ENCODE measurements at regions of chr17 and their contacts with region 1.

Region 1: GRCh38 chr17:51461578-51462004 is 201.2 kb downstream of the UTP18 start:
- DNase-seq: peak; percentile 29 to 85
- H3K4me3 ChIP-seq: no peak overlapping the region
- H3K27ac ChIP-seq: no peak overlapping the region
- H3K4me1 ChIP-seq: no peaks in the 10 kb centered on the region
- H3K27me3 ChIP-seq: no peaks in the 10 kb centered on the region
- CTCF ChIP-seq: peak; percentile 80 to 92 (median 85)
- EP300 ChIP-seq: no peak
- POLR2A ChIP-seq: no peak
- RAD21 ChIP-seq: peak; percentile 59 to 72

Region 2: DNA sequence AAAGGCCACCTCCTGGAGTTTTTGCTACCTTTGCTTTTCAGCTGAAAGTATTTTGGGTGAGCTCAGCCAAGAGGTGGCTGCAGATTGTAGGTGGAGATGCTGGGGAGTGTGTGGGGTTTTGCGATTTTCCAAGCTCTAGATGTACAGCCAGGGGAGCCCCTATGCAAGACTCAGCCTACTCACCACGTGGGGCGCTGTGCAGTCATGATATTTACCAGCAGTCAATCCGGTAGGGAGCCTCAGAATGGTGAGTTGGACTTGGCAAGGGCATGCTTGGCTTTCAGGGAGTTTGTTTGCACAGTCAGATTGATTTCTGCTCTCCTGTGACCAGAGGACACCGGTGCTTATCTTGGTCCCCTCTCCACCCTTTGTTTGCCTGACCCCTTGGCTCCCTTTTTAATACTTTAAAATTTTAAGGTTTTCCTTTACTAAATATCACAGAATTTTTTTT is 25.9 kb before region 1 on chr17:
- CTCF ChIA-PET with region 1: interaction called, 15 read pairs
- POLR2A ChIA-PET with region 1: no interaction called
- DNase-seq: peak; percentile 7 to 72
- H3K4me3 ChIP-seq: no peak overlapping the region
- H3K27ac ChIP-seq: no peak overlapping the region
- H3K4me1 ChIP-seq: peaks cover 0 to 3% (median 0%) of the 10 kb centered on the region in 4 experiments; a peak in 2 of 7 replicates
- H3K27me3 ChIP-seq: no peaks in the 10 kb centered on the region
- CTCF ChIP-seq: peak; percentile 78 to 81 (median 80)
- EP300 ChIP-seq: no peak
- POLR2A ChIP-seq: no peak
- RAD21 ChIP-seq: peak; percentile 48 to 52

Region 3: GRCh38 chr17:51472670-51473205 is 11.1 kb after region 1 on chr17:
- CTCF ChIA-PET with region 1: interaction called, 45 read pairs
- POLR2A ChIA-PET with region 1: no interaction called
- DNase-seq: no peak
- H3K4me3 ChIP-seq: no peak overlapping the region
- H3K27ac ChIP-seq: no peak overlapping the region
- H3K4me1 ChIP-seq: peaks cover 0 to 7% (median 1%) of the 10 kb centered on the region in 4 experiments; a peak in 3 of 7 replicates
- H3K27me3 ChIP-seq: no peaks in the 10 kb centered on the region
- CTCF ChIP-seq: no peak
- EP300 ChIP-seq: no peak
- POLR2A ChIP-seq: no peak
- RAD21 ChIP-seq: no peak

Region 4: DNA sequence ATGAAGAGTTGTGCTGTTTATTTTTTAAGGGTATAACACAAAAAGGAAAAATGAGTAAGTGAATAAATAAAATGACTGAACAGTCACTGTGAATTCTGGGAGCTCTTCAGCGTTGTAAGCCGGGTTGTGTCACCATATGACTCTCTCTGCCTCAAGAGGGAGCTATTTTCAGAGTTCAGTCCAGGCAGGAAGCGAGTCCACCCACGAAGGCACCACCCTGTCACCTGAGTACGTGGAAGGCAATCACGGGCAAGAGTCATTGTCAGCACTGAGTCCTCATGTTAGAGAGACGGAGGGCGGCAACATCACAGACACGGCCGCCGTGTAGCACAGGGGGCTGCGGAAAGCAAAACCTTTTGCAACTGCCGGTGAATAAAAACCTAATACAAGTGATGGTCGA is 26.4 kb after region 1 on chr17:
- CTCF ChIA-PET with region 1: interaction called, 32 read pairs
- POLR2A ChIA-PET with region 1: no interaction called
- DNase-seq: peak in 1 of 2 experiments; percentile 69
- H3K4me3 ChIP-seq: no peak overlapping the region
- H3K27ac ChIP-seq: no peak overlapping the region
- H3K4me1 ChIP-seq: no peaks in the 10 kb centered on the region
- H3K27me3 ChIP-seq: no peaks in the 10 kb centered on the region
- CTCF ChIP-seq: peak; percentile 57 to 86 (median 58)
- EP300 ChIP-seq: no peak
- POLR2A ChIP-seq: no peak
- RAD21 ChIP-seq: peak; percentile 37 to 54

Region 5: GRCh38 chr17:51745979-51746378 is 284.4 kb after region 1 on chr17:
- CTCF ChIA-PET with region 1: no interaction called
- POLR2A ChIA-PET with region 1: no interaction called
- DNase-seq: no peak
- H3K4me3 ChIP-seq: no peak overlapping the region
- H3K27ac ChIP-seq: no peak overlapping the region
- H3K4me1 ChIP-seq: peaks cover 0 to 6% (median 5%) of the 10 kb centered on the region in 4 experiments; a peak in 4 of 7 replicates
- H3K27me3 ChIP-seq: no peaks in the 10 kb centered on the region
- CTCF ChIP-seq: no peak
- EP300 ChIP-seq: no peak
- POLR2A ChIP-seq: no peak
- RAD21 ChIP-seq: no peak